ENCODE measurements at regions of chr3 and their contacts with region 1.

Region 1: GRCh38 chr3:135083179-135083578 is 288.1 kb downstream of the EPHB1 start:
- DNase-seq: no peak
- ATAC-seq: no peak
- H3K4me3 ChIP-seq: no peak overlapping the region
- H3K27ac ChIP-seq: no peak overlapping the region
- H3K4me1 ChIP-seq: no peaks in the 10 kb centered on the region
- H3K27me3 ChIP-seq: no peaks in the 10 kb centered on the region
- CTCF ChIP-seq: no peak

Region 2: DNA sequence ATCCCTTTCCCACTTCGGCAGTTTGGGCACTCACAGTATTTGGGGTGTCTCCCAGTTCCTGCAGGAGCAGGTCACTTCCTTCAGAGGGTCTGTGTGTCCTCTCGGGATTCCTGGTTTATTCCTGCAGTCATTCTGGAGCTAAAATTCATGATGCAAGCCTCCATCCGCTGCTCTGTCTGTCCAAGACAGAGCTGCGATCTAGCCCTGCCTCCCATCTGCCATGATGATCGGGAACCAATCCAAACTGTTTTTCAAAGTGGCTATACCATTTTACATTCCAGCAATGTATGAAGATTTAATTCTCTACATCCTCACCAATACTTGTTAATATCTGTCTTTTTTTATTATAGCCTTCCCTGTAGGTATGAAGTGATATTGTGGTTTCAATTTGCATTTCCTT is 15.2 kb before region 1 on chr3:
- CTCF ChIA-PET with region 1: no interaction called
- POLR2A ChIA-PET with region 1: interaction called, 35 read pairs
- intact Hi-C with region 1: no loop called
- DNase-seq: no peak
- ATAC-seq: no peak
- H3K4me3 ChIP-seq: no peak overlapping the region
- H3K27ac ChIP-seq: peak overlapping the region; percentile 72
- H3K4me1 ChIP-seq: peaks cover 6% of the 10 kb centered on the region; the same call in 1 of the 2 replicates
- H3K27me3 ChIP-seq: no peaks in the 10 kb centered on the region
- CTCF ChIP-seq: no peak

Measured in PC-3 (cell line).